ENCODE measurements at regions of chr1 and their contacts with region 1.

Region 1: DNA sequence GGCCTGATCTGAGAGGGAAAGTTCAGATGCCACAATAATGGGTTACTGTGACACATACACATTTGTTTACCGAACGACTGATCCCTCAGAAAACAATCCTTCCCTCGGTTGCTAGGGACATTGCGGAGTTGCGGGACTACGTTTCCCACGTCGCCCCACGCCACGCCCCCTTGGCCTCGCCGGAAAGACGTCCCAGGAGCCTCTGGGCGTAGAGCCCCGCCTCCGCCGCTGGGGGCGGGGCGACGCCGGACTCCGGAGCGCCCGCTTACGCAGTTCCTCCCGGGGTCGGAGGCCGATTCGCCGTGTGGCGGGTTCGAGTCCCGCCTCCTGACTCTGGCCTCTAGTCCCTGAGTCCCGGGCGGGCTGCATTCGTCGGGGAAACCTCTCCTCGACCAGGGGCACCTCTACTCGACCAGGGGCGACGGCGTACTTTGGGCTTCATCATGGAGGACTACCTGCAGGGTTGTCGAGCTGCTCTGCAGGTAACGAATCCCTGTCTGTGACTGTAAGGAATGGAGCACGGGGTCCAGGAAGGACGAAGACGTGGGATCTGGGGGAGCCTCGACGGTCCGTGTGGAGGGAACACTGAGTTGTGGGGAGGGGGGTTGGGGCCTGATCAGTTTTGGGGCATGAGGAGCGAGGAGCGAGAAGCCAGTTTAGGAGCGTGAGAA is at the start of gene PRUNE1:
- DNase-seq: peak; percentile 92
- H3K4me3 Mint-ChIP-seq: peak within 1 kb of the TSS; percentile 98
- H3K27ac Mint-ChIP-seq: peak within 1 kb of the TSS; percentile 96
- H3K4me1 Mint-ChIP-seq: peaks cover 51% of the 10 kb centered on the region
- H3K27me3 Mint-ChIP-seq: no peaks in the 10 kb centered on the region
- total RNA-seq, gene PRUNE1: 15.1 and 15.5 TPM in 2 replicates

Region 2: DNA sequence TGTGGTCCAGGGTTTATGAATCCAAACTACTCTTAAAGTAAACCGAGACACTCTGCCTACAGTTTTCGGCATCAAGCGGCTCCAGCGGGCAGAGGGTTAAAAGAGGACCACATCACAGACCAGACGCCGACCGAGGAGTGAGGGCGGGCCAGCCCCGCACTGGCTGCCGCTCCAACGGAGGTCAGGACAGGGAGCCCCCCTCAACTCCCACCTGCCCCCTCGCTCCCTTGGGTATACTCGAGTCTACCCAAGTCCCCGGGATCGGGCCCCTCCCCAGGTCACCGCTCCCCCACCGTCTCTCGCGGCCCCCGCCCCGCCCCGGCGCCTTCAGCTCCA is 132.2 kb before region 1 on chr1:
- intact Hi-C with region 1: loop called (anchors 2 kb)
- DNase-seq: no peak
- H3K4me3 Mint-ChIP-seq: peak overlapping the region; percentile 95
- H3K27ac Mint-ChIP-seq: peak overlapping the region; percentile 92
- H3K4me1 Mint-ChIP-seq: peaks cover 33% of the 10 kb centered on the region
- H3K27me3 Mint-ChIP-seq: no peaks in the 10 kb centered on the region

Region 3: DNA sequence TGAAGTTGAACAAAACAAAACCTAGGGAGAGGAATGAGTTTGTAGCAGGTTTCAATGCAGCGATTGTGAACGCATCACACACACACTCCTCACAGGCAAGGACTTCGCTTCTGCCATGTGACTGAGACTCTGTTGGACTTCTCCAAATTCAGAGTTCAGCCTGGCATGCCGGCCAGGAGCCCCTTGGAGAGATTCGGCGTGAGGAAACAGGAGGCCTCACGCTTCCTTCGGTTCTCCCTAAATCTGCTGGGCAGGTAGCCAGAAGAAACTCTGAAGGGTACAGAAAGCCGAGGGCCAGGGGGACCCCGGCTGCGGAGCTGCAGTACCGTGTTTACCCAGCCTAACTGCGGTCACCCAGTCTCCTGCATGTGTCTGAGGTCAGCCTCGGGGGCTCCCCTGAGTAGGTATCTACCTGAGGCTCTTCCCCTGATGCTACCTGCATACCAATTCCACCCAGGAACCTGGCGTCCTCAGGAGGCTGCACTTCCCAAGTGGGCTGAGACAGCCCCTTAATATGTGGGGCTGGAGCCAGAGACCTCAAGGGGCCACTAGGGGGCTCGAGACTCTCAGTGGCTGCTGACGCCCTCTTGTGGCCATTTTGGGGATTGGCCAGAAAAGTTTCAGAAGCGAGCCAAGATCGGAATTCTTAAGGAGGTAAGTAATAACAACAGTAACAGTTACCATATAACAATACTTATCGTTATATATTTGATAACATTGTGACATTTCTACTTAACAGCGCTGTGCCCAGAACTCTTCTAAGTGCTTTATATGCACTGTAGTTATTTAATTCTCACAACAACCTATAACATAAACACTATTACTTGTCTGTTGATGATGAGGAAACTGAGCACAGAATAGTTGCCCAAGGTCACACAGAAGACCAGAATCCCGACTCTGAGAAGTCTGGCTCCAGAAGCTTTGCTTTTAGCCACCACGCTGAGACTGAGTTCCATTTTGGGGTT is 29.0 kb before region 1 on chr1:
- intact Hi-C with region 1: loop called (anchors 1 kb)
- DNase-seq: peak; percentile 81
- H3K4me3 Mint-ChIP-seq: no peak overlapping the region
- H3K27ac Mint-ChIP-seq: peak overlapping the region; percentile 5
- H3K4me1 Mint-ChIP-seq: peaks cover 26% of the 10 kb centered on the region
- H3K27me3 Mint-ChIP-seq: no peaks in the 10 kb centered on the region

Region 4: GRCh38 chr1:151047925-151048645 is 39.8 kb after region 1 on chr1:
- intact Hi-C with region 1: loop called (anchors 2 kb)
- DNase-seq: peak; percentile 52
- H3K4me3 Mint-ChIP-seq: peak overlapping the region; percentile 86
- H3K27ac Mint-ChIP-seq: peak overlapping the region; percentile 77
- H3K4me1 Mint-ChIP-seq: peaks cover 14% of the 10 kb centered on the region
- H3K27me3 Mint-ChIP-seq: no peaks in the 10 kb centered on the region

Region 5: DNA sequence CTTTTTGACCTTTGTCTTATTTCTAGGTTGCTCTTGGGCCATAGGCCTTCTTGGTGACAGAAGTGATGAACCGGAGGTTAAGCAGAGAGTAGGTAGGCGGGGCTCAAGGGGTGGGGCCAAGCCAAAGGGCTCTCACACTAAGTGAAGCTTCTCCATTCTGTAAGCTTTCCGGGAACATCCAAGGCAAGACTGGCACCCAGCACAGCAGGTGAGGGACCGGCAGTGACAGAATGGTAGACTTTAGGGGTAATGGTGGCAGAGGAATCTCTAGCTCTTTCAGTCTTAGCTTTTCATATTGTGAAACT is 148.1 kb after region 1 on chr1 and contains the start of gene TNFAIP8L2:
- intact Hi-C with region 1: loop called (anchors 2 kb)
- DNase-seq: peak; percentile 71
- H3K4me3 Mint-ChIP-seq: peak within 1 kb of the TSS; percentile 99
- H3K27ac Mint-ChIP-seq: peak within 1 kb of the TSS; percentile 99
- H3K4me1 Mint-ChIP-seq: peaks cover 37% of the 10 kb centered on the region
- H3K27me3 Mint-ChIP-seq: no peaks in the 10 kb centered on the region
- total RNA-seq, gene TNFAIP8L2: 24.3 and 28.7 TPM in 2 replicates

Region 6: GRCh38 chr1:151254217-151255213 is 246.2 kb after region 1 on chr1 and contains the start of gene PSMD4:
- intact Hi-C with region 1: loop called (anchors 10 kb)
- DNase-seq: peak; percentile 92
- H3K4me3 Mint-ChIP-seq: peak within 1 kb of the TSS; percentile 98
- H3K27ac Mint-ChIP-seq: peak within 1 kb of the TSS; percentile 92
- H3K4me1 Mint-ChIP-seq: peaks cover 17% of the 10 kb centered on the region
- H3K27me3 Mint-ChIP-seq: no peaks in the 10 kb centered on the region
- total RNA-seq, gene PSMD4: 271 and 280 TPM in 2 replicates